ENCODE measurements at regions of chr4 and their contacts with region 1.

Region 1: GRCh38 chr4:6673660-6674499 is 19.8 kb upstream of the S100P start:
- DNase-seq: peak; percentile 89 to 99 (median 93)
- ATAC-seq: peak; percentile 79
- H3K4me3 ChIP-seq: peak overlapping the region; percentile 62 to 92
- H3K4me3 Mint-ChIP-seq: peak overlapping the region; percentile 99
- H3K27ac ChIP-seq: peak overlapping the region; percentile 71 to 78
- H3K27ac Mint-ChIP-seq: peak overlapping the region; percentile 99
- H3K4me1 ChIP-seq: peaks cover 38% of the 10 kb centered on the region
- H3K4me1 Mint-ChIP-seq: peaks cover 48% of the 10 kb centered on the region
- H3K27me3 ChIP-seq: no peaks in the 10 kb centered on the region
- H3K27me3 Mint-ChIP-seq: no peaks in the 10 kb centered on the region
- CTCF ChIP-seq: no peak

Region 2: DNA sequence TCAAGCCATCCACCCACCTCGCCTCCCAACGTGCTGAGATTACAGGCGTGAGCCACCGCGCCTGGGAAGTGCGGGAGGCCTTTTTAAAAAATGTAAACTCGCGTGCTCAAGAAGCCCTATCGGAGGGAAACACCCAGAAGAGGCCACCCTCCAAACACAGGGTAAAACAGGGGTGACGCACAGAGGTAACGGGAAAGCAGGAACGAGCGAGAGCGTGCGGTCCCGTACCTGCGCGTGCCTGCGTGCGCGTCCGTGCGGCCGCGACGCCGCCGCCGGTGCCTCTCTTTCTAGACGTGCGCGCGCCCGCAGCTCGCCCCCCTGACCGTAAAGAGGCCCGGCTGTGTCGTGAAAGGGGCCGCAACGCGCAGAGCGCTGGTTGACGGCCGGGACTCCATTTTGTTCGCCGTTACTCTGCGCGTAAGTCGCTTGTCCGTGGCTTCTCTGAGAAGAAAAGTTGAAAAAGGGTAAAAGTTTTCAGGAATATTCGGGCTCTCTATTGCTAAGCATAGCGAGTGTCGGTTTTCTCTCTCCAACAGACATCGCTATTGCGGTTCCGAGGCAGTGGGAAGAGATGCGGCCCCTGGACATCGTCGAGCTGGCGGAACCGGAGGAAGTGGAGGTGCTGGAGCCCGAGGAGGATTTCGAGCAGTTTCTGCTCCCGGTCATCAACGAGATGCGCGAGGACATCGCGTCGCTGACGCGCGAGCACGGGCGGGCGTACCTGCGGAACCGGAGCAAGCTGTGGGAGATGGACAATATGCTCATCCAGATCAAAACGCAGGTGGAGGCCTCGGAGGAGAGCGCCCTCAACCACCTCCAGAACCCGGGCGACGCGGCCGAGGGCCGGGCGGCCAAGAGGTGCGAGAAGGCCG is 33.4 kb before region 1 on chr4 and contains the start of gene MRFAP1:
- CTCF ChIA-PET with region 1: interaction called, 15 read pairs
- POLR2A ChIA-PET with region 1: interaction called, 76 read pairs
- intact Hi-C with region 1: loop called (anchors 1 kb)
- DNase-seq: peak; percentile 90 to 98 (median 95)
- ATAC-seq: peak; percentile 79
- H3K4me3 ChIP-seq: peak within 1 kb of the TSS; percentile 96 to 97
- H3K4me3 Mint-ChIP-seq: peak within 1 kb of the TSS; percentile 99
- H3K27ac ChIP-seq: peak within 1 kb of the TSS; percentile 96
- H3K27ac Mint-ChIP-seq: peak within 1 kb of the TSS; percentile 99
- H3K4me1 ChIP-seq: peaks cover 17% of the 10 kb centered on the region
- H3K4me1 Mint-ChIP-seq: peaks cover 41% of the 10 kb centered on the region
- H3K27me3 ChIP-seq: no peaks in the 10 kb centered on the region
- H3K27me3 Mint-ChIP-seq: no peaks in the 10 kb centered on the region
- CTCF ChIP-seq: no peak
- total RNA-seq, gene MRFAP1: 177 to 183 TPM

Region 3: DNA sequence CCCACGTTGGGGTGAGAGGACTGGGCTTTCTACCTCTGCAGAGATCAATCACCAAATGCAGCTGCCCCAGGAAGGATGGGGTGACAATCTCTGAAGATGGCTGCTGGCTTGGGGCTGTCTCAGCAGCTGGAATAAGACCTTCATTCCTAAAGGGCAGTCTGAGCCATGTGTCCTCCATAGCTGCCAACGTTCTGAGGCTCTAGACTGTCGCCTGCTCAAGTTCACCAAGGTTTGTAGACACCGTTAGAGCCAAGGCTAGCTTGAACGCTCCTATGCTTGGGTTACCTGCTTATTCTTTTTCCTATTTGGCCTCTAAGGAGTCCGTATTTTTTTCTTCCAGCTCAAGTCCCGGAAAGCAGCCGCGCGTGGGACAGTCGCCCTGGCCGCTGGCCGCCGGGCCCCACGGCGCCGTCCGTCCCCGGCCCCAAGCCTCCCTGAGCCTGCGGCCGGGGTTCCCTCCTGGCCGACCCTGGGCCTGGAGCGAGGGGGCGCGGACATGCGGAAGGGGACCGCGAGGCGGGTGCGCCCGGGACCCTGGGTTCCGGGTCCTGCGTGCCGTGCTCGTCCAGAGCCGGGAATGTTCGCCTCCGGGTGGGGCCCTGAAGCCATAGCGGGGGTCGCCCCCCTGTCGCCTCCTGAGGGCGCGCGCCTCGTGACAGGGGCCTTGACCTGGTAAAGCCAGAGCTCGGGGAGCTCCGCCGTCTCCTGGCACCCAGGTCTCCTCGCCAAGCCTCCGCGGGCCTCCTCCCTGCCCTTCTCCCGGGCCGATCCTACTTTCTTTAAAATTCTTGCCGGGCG is 10.1 kb before region 1 on chr4:
- CTCF ChIA-PET with region 1: interaction called, 6 read pairs
- POLR2A ChIA-PET with region 1: interaction called, 24 read pairs
- intact Hi-C with region 1: no loop called
- DNase-seq: no peak
- ATAC-seq: no peak
- H3K4me3 ChIP-seq: peak overlapping the region; percentile 29 to 42
- H3K4me3 Mint-ChIP-seq: peak overlapping the region; percentile 52
- H3K27ac ChIP-seq: no peak overlapping the region
- H3K27ac Mint-ChIP-seq: no peak overlapping the region
- H3K4me1 ChIP-seq: peaks cover 14% of the 10 kb centered on the region
- H3K4me1 Mint-ChIP-seq: peaks cover 8% of the 10 kb centered on the region
- H3K27me3 ChIP-seq: peaks cover 0 to 12% of the 10 kb centered on the region in 2 experiments
- H3K27me3 Mint-ChIP-seq: peaks cover 12% of the 10 kb centered on the region
- CTCF ChIP-seq: no peak

Region 4: DNA sequence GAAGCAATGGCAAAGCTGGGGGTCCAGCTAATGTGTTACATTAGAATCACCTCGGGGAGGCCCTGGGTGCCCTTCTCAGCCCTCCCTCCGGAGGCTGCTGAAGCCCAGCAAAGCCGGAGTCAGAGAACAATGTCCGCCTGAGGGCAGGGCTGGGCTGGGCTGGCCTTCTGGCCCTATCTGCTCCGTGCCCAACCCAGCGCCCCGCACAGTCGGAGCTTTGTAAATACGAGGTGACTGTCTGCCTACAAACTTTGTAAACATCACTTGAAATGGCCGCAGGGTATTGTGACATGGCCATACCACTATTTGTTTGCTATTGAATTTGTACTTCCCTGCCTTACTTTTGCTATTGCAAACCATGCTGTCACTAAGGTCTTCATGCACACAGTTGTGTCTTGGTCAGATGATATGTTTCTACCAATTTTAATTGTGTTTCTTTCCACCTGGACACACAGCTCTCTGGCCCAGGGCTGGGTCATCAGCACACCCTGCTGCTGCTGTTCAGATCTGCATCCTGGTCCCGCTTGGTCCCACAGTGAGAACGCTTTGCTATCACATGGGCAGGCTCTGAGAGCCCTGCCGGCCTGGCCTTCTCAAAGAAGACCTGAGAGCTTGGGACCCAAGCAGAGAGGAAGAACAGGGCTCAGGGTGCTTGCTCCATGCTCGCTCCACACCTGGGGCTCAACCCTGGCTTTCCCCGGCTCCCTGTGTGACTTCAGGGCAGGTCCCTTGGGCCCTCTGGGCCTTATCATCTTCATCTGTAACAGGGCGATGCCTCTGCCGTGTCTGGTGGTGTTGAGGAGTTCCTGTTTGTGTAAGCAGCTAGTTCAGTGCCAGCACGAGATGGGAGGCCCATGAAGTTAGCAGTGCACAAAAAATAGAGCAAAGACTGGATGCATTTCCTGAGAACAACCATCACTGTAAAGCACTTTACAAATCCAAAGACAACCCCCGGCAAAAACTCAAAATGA is 22.1 kb after region 1 on chr4:
- CTCF ChIA-PET with region 1: interaction called, 68 read pairs
- POLR2A ChIA-PET with region 1: interaction called, 155 read pairs
- intact Hi-C with region 1: loop called in 1 of 2 experiments (anchors 1 kb)
- DNase-seq: peak in 8 of 9 experiments; percentile 46 to 86 (median 70)
- ATAC-seq: peak; percentile 88
- H3K4me3 ChIP-seq: peak overlapping the region in 1 of 2 experiments; percentile 10
- H3K4me3 Mint-ChIP-seq: peak overlapping the region; percentile 30
- H3K27ac ChIP-seq: peak overlapping the region; percentile 67 to 91
- H3K27ac Mint-ChIP-seq: peak overlapping the region; percentile 93
- H3K4me1 ChIP-seq: peaks cover 86% of the 10 kb centered on the region
- H3K4me1 Mint-ChIP-seq: peaks cover 76% of the 10 kb centered on the region
- H3K27me3 ChIP-seq: no peaks in the 10 kb centered on the region
- H3K27me3 Mint-ChIP-seq: no peaks in the 10 kb centered on the region
- CTCF ChIP-seq: no peak

Region 5: DNA sequence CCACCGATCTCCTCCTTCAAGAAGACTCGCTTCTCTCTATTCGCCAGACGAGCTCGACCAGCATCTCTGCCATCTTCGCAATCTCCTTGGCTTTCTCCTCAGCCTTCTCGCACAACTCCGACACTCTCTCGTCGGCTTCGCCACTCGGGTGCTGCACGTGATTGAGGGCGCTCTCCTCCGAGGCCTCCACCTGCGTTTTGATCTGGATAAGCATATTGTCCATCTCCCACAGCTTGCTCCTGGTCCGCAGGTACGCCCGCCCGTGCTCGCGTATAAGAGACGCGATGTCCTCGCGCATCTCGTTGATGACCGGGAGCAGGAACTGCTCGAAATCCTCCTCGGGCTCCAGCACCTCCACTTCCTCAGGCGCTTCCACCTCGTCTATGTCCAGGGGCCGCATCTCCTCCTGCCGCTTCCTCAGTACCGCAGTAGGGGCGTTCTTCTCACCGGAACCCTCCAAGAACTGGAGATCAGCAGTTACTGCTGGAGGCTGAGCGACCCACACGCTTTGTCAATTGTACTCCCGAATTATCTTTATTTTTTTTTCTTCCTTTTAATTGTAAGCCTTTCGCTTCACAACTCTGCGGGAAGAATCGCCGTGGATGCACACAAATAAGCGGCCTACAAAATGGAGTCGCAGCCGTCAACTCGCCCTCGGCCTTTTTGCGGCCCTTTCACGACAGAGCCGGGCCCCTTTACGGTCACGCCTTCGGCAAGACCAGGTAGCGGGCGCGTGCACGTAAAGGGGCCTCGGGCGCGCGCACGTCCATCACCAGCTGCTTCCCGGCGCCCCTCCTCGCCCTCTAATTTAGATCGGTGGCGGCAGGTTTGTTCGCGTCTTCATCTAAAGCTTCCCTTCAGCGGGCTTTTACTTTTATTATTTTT is 35.6 kb after region 1 on chr4 and contains the start of gene MRFAP1L1:
- CTCF ChIA-PET with region 1: interaction called, 68 read pairs
- POLR2A ChIA-PET with region 1: interaction called, 155 read pairs
- intact Hi-C with region 1: loop called (anchors 1 kb)
- DNase-seq: peak; percentile 92 to 99 (median 97)
- ATAC-seq: peak; percentile 89
- H3K4me3 ChIP-seq: peak within 1 kb of the TSS; percentile 73 to 86
- H3K4me3 Mint-ChIP-seq: peak within 1 kb of the TSS; percentile 98
- H3K27ac ChIP-seq: peak within 1 kb of the TSS; percentile 79
- H3K27ac Mint-ChIP-seq: peak within 1 kb of the TSS; percentile 99
- H3K4me1 ChIP-seq: peaks cover 48% of the 10 kb centered on the region
- H3K4me1 Mint-ChIP-seq: peaks cover 65% of the 10 kb centered on the region
- H3K27me3 ChIP-seq: no peaks in the 10 kb centered on the region
- H3K27me3 Mint-ChIP-seq: no peaks in the 10 kb centered on the region
- CTCF ChIP-seq: no peak
- total RNA-seq, gene MRFAP1L1: 27.5 to 30.0 TPM

Region 6: DNA sequence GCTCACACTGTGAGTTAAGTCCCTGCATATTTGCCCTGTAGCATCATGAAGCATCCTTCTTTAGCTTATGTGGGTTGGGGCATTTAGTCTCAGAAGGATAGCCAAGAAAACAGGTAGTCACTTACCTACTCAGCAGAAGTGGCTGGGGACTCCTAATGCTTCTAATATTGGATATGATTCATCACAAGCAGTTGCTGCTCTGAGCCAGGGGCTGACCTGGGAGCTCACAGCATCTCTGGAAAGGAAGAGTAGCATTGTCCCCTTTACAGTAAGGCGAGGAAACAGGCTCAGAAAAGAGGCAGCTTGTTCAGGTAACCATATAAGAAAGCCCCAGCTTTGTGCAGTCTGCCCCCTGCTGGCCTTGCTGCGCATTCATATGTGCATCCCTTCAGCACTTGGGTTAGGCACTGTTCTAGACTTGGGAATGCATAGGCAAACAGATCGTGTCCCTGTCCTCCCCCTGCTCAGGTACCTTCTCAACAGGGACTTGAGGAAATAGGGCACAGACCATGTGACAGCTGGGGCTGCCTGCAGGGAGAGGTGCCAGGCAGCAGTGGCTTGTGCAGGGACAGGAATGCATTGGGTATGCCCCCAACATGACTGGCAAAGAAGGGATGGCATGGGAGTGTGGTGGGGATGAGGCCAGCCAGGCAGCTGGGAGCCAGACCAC is 200.0 kb after region 1 on chr4:
- CTCF ChIA-PET with region 1: interaction called, 33 read pairs
- POLR2A ChIA-PET with region 1: interaction called, 15 read pairs
- intact Hi-C with region 1: loop called (anchors 1 kb)
- DNase-seq: peak; percentile 69 to 89 (median 82)
- ATAC-seq: peak; percentile 96
- H3K4me3 ChIP-seq: no peak overlapping the region
- H3K4me3 Mint-ChIP-seq: no peak overlapping the region
- H3K27ac ChIP-seq: no peak overlapping the region
- H3K27ac Mint-ChIP-seq: no peak overlapping the region
- H3K4me1 ChIP-seq: no peaks in the 10 kb centered on the region
- H3K4me1 Mint-ChIP-seq: peaks cover 3% of the 10 kb centered on the region
- H3K27me3 ChIP-seq: no peaks in the 10 kb centered on the region
- H3K27me3 Mint-ChIP-seq: no peaks in the 10 kb centered on the region
- CTCF ChIP-seq: peak; percentile 79